Ascending aorta (tissue), 2 donors: ENCODE measurements at regions of chr10 and their contacts with region 1.

Region 1: DNA sequence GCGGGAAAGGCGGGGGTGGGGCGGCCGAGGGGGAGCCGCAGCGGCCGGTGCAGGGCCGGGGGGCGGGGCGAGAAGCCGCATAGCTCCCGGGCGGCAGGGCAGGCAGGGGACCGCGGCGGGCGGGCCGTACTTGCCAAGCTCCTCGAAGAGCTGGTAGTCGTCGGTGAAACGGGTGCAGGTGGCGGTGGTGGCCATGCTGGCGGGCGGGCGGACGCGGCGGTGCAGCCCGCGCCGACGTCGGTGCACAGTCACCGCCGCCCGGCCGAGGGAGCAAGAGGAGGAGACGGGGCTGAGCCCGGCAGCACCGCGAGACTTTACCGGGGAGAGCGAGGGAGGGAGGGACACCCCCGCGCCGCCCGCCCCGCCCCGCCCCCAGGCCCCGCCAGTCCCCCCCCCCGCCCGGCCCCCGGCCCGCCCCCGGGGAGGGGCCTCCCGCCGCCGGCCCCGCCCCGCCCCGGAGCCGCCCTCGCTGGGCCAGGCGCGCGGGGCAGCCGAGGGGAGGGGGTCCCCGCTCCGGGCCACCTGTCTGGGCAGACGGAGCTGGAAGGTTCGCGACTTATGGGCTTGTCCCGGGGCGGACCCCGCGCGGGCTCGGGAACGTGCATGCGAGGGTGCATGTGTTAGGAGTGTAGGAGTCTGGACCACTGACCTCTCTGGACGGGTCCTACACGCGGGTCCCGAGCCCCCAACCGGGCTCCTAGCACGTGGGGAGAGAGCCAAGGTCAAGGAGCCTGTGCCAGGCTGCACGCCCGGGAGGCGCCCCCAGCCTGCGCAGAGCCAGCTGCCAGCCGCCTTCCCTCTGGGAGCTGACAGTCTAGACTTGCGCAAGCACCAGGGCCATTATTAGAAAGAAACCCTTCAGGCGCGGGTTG is at the start of gene CAMK2G:
- DNase-seq: peak; percentile 41 to 91
- H3K4me3 ChIP-seq: peak within 1 kb of the TSS; percentile 75 to 96
- H3K27ac ChIP-seq: peak within 1 kb of the TSS; percentile 67 to 87
- H3K4me1 ChIP-seq: peaks cover 16 to 48% of the 10 kb centered on the region in 2 donors
- H3K27me3 ChIP-seq: no peaks in the 10 kb centered on the region
- CTCF ChIP-seq: no peak
- total RNA-seq, gene CAMK2G: 60.3 TPM

Region 2: GRCh38 chr10:73859428-73859783 is 15.1 kb before region 1 on chr10:
- intact Hi-C with region 1: loop called (anchors 1 kb)
- DNase-seq: no peak
- H3K4me3 ChIP-seq: peak overlapping the region in 1 of 2 donors; percentile 5
- H3K27ac ChIP-seq: peak overlapping the region; percentile 94
- H3K4me1 ChIP-seq: peaks cover 24 to 68% of the 10 kb centered on the region in 2 donors
- H3K27me3 ChIP-seq: no peaks in the 10 kb centered on the region
- CTCF ChIP-seq: no peak